ENCODE measurements at regions of chr4 and their contacts with region 1.

Region 1: GRCh38 chr4:114005569-114006442 is 26.4 kb upstream of the ARSJ start:
- DNase-seq: peak in 1 of 2 donors; percentile 43
- ATAC-seq: peak; percentile 80 to 84 (median 81)
- H3K4me3 ChIP-seq: no peak overlapping the region
- H3K4me3 Mint-ChIP-seq: peak overlapping the region; percentile 87
- H3K27ac ChIP-seq: peak overlapping the region; percentile 42
- H3K27ac Mint-ChIP-seq: peak overlapping the region; percentile 88 to 90
- H3K4me1 ChIP-seq: peaks cover 10% of the 10 kb centered on the region
- H3K4me1 Mint-ChIP-seq: peaks cover 59 to 64% of the 10 kb centered on the region in 2 donors
- H3K27me3 ChIP-seq: no peaks in the 10 kb centered on the region
- H3K27me3 Mint-ChIP-seq: no peaks in the 10 kb centered on the region
- CTCF ChIP-seq: no peak

Region 2: DNA sequence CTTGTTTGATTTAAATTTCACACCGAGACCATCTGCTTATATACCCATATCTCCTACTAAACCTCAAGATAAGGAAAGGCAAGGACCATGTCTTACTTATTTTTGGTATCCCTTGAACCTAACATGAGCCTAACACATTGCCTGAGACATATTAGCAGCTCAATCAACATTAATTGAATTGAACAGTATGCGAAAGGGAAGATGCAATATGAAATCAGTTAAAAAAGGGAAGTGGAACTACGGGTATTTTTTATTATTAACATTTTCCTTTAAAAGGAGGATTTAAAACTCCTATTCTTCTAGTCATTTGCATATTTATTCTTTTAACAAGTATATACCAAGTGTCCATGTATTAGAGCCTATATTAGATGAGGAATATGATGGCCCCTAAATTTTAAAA is 441.3 kb before region 1 on chr4:
- intact Hi-C with region 1: loop called (anchors 10 kb)
- DNase-seq: no peak
- ATAC-seq: peak in 1 of 3 donors; percentile 16
- H3K4me3 ChIP-seq: no peak overlapping the region
- H3K4me3 Mint-ChIP-seq: peak overlapping the region; percentile 85
- H3K27ac ChIP-seq: peak overlapping the region; percentile 24
- H3K27ac Mint-ChIP-seq: peak overlapping the region; percentile 74 to 82
- H3K4me1 ChIP-seq: peaks cover 10% of the 10 kb centered on the region
- H3K4me1 Mint-ChIP-seq: peaks cover 34 to 37% of the 10 kb centered on the region in 2 donors
- H3K27me3 ChIP-seq: no peaks in the 10 kb centered on the region
- H3K27me3 Mint-ChIP-seq: peaks cover 10 to 15% of the 10 kb centered on the region in 2 donors
- CTCF ChIP-seq: no peak

Region 3: DNA sequence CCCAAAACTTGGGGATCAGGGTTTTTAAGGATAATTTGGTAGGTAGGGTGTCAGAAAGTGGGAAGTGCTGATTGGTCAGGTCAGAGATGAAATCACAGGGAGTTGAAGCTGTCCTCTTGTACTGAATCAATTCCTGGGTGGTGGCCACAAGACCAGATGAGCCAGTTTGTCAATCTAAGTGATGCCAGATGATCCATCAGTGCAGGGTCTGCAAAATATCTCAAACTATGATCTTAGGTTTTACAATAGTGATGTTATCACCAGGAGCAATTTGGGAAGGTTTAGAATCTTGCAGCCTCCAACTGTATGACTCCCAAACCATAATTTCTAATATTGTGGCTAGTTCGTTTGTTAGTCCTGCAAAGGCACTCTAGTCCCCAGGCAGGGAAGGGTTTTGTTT is 287.6 kb before region 1 on chr4:
- intact Hi-C with region 1: no loop called
- DNase-seq: no peak
- ATAC-seq: no peak
- H3K4me3 ChIP-seq: no peak overlapping the region
- H3K4me3 Mint-ChIP-seq: no peak overlapping the region
- H3K27ac ChIP-seq: no peak overlapping the region
- H3K27ac Mint-ChIP-seq: no peak overlapping the region
- H3K4me1 ChIP-seq: no peaks in the 10 kb centered on the region
- H3K4me1 Mint-ChIP-seq: peaks cover 17 to 36% of the 10 kb centered on the region in 2 donors
- H3K27me3 ChIP-seq: no peaks in the 10 kb centered on the region
- H3K27me3 Mint-ChIP-seq: no peaks in the 10 kb centered on the region
- CTCF ChIP-seq: no peak

Region 4: GRCh38 chr4:113952452-113953029 is 53.3 kb before region 1 on chr4:
- intact Hi-C with region 1: loop called (anchors 10 kb)
- DNase-seq: peak in 1 of 2 donors; percentile 57
- ATAC-seq: peak; percentile 61 to 95 (median 93)
- H3K4me3 ChIP-seq: no peak overlapping the region
- H3K4me3 Mint-ChIP-seq: peak overlapping the region; percentile 11
- H3K27ac ChIP-seq: no peak overlapping the region
- H3K27ac Mint-ChIP-seq: no peak overlapping the region
- H3K4me1 ChIP-seq: peaks cover 2% of the 10 kb centered on the region
- H3K4me1 Mint-ChIP-seq: peaks cover 5 to 8% of the 10 kb centered on the region in 2 donors
- H3K27me3 ChIP-seq: no peaks in the 10 kb centered on the region
- H3K27me3 Mint-ChIP-seq: peaks cover 0 to 6% of the 10 kb centered on the region in 2 donors
- CTCF ChIP-seq: peak; percentile 77

Region 5: GRCh38 chr4:114026447-114026846 is 20.6 kb after region 1 on chr4:
- intact Hi-C with region 1: loop called (anchors 1 kb)
- DNase-seq: no peak
- ATAC-seq: peak; percentile 53 to 81 (median 70)
- H3K4me3 ChIP-seq: no peak overlapping the region
- H3K4me3 Mint-ChIP-seq: no peak overlapping the region
- H3K27ac ChIP-seq: no peak overlapping the region
- H3K27ac Mint-ChIP-seq: no peak overlapping the region
- H3K4me1 ChIP-seq: peaks cover 3% of the 10 kb centered on the region
- H3K4me1 Mint-ChIP-seq: no peaks in the 10 kb centered on the region
- H3K27me3 ChIP-seq: no peaks in the 10 kb centered on the region
- H3K27me3 Mint-ChIP-seq: no peaks in the 10 kb centered on the region
- CTCF ChIP-seq: no peak

Region 6: DNA sequence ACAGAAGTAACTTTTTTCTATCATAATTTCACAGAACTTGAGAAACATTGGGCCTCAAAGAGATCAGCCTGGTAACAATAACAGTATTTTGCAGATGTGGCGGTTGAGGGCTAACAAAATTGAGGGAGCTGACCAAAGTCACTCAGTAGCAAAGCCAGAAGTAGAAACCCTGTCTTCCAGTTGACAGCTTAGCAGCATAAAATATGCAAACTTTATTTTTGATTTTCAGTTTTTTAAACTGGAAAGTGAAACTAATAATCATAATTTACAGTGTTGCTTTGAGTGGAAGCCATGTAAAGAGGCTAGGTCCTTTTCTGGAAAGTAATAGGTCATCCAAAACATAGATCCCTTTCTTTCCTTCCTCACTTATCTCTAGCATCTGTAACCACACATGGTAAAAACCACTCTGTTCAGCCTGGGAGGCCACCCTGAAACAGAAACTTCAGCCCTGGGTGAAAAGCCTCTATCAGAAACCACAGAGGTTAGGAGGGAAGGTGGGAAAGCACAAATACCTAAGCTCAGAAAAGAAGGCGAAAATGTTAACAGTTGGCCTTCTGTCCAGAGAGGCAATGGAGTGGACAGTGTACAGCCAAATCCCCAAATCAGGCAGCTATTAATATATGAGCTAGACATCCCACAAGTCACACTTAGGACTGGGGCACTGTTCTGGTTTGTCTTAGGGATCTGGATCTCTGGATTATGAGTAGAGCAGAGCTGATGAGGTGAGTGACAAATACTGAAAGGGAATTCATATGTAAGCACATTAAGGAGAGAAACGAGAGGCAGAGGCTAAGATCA is 34.7 kb after region 1 on chr4:
- intact Hi-C with region 1: loop called (anchors 5 kb)
- DNase-seq: peak in 1 of 2 donors; percentile 8
- ATAC-seq: peak; percentile 32 to 70 (median 36)
- H3K4me3 ChIP-seq: no peak overlapping the region
- H3K4me3 Mint-ChIP-seq: peak overlapping the region; percentile 61
- H3K27ac ChIP-seq: peak overlapping the region; percentile 24
- H3K27ac Mint-ChIP-seq: peak overlapping the region; percentile 84
- H3K4me1 ChIP-seq: peaks cover 3% of the 10 kb centered on the region
- H3K4me1 Mint-ChIP-seq: peaks cover 21 to 25% of the 10 kb centered on the region in 2 donors
- H3K27me3 ChIP-seq: no peaks in the 10 kb centered on the region
- H3K27me3 Mint-ChIP-seq: no peaks in the 10 kb centered on the region
- CTCF ChIP-seq: no peak

Region 7: GRCh38 chr4:114052227-114052626 is 46.4 kb after region 1 on chr4:
- intact Hi-C with region 1: no loop called
- DNase-seq: no peak
- ATAC-seq: no peak
- H3K4me3 ChIP-seq: no peak overlapping the region
- H3K4me3 Mint-ChIP-seq: no peak overlapping the region
- H3K27ac ChIP-seq: no peak overlapping the region
- H3K27ac Mint-ChIP-seq: no peak overlapping the region
- H3K4me1 ChIP-seq: no peaks in the 10 kb centered on the region
- H3K4me1 Mint-ChIP-seq: no peaks in the 10 kb centered on the region
- H3K27me3 ChIP-seq: no peaks in the 10 kb centered on the region
- H3K27me3 Mint-ChIP-seq: peaks cover 0 to 3% of the 10 kb centered on the region in 2 donors
- CTCF ChIP-seq: no peak

Measured in natural killer cell (primary cell).